Endothelial cell of umbilical vein (primary cell): ENCODE measurements at regions of chr13 and their contacts with region 1.

Region 1: DNA sequence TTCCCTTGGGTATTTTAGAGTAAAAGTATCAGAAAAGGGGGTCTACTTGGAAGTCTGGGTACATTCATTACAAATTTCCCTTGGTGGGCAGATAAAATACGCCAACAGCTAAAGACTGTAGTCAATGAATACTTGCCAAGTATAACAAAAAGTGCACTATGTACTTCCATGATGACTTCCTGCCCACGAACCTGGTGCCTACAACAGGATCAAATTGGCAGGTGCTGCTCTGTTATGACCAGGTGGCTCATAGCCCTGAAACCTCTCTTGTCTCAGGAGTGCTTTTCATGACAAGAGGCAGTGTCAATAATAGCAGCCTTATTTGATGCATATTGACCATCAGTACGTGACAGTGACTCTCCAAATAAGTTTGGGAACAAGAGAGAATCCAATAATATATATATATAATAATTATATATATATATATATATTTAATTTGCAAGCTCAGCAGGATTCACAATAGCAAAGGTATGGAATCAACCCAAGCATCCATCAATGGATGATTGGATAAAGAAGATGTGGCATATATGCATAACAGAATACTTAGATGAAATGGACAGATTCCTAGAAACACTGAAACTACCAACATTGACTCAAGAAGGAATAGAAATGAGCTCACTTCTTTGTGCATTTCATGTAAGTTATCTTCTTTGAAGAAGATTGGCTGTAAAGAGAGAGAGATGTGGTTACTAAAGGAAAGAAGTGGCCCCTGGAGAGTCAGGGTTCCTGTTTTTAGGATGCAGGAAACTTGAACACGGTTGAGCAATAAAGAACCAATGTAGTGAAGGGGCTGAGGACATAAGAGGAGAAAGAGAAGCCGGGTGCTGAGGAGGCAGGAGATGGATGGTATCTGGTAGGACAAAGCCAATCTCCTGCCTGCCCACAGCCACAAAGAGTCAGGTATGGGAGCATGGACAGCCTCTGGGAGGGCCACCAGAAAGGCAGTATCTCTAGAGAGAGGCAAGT is 52.0 kb upstream of the GTF2F2 start:
- DNase-seq: no peak
- H3K4me3 ChIP-seq: no peak overlapping the region
- H3K27ac ChIP-seq: no peak overlapping the region
- H3K4me1 ChIP-seq: no peaks in the 10 kb centered on the region
- H3K27me3 ChIP-seq: peaks cover 4 to 5% of the 10 kb centered on the region in 2 experiments
- CTCF ChIP-seq: no peak
- POLR2A ChIP-seq: no peak

Region 2: GRCh38 chr13:44679597-44679996 is 388.7 kb before region 1 on chr13:
- CTCF ChIA-PET with region 1: no interaction called
- POLR2A ChIA-PET with region 1: no interaction called
- dilution Hi-C with region 1: no loop called
- intact Hi-C with region 1: no loop called
- DNase-seq: no peak
- H3K4me3 ChIP-seq: no peak overlapping the region
- H3K27ac ChIP-seq: no peak overlapping the region
- H3K4me1 ChIP-seq: no peaks in the 10 kb centered on the region
- H3K27me3 ChIP-seq: no peaks in the 10 kb centered on the region
- CTCF ChIP-seq: no peak
- POLR2A ChIP-seq: no peak

Region 3: DNA sequence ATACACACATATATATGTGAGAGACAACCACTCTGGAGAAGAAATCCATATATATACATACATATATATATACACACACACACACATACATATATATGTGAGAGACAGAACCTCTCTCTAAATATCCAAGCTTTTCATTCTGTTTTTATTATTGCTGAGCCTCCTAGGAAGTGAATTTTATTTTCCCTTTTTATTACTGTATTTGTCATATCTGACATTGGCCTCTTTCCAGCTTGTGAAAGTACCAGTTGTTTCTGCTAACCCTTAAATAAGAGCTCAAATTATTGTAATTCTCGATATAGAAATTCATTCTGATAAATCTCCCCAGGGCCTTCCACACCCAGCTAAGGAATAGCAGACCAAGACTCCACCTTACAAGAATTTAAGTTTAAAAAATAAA is 160.1 kb before region 1 on chr13:
- CTCF ChIA-PET with region 1: no interaction called
- POLR2A ChIA-PET with region 1: no interaction called
- dilution Hi-C with region 1: no loop called
- intact Hi-C with region 1: no loop called
- DNase-seq: no peak
- H3K4me3 ChIP-seq: no peak overlapping the region
- H3K27ac ChIP-seq: no peak overlapping the region
- H3K4me1 ChIP-seq: no peaks in the 10 kb centered on the region
- H3K27me3 ChIP-seq: no peaks in the 10 kb centered on the region
- CTCF ChIP-seq: no peak
- POLR2A ChIP-seq: no peak

Region 4: DNA sequence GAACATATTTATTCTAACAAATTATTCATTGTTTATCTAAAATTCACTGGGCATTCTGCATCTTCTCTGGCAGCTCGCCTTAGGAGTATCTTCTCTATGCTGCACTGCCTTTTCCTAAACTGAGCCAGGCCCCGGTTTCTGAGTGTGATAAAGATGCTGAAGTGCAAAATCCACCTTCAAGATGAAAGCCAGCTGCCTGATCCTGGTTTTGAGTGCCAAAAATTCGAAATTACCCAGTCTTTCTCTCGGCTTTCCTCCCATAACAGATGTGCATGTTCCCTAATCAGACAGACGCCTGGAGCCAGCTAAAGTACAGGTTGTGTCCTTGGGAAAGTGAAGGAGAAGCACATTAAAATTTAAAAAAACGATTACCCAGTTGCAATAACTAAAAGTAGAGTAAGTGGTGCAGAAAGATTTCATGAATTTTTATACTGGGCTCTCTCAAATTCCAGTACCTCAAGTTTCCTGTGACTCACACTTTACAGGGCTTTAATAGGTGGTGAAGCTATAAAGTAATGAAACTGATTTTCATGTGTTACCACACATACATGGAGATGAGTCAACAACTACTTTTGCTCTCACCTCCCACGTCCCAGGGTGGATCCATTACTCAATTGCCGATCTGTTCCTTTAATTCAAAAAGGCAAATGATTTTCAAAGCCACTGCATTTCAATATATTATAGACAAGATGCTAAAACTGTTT is 13.0 kb before region 1 on chr13:
- CTCF ChIA-PET with region 1: interaction called, 10 read pairs
- POLR2A ChIA-PET with region 1: no interaction called
- dilution Hi-C with region 1: no loop called
- intact Hi-C with region 1: no loop called
- DNase-seq: peak; percentile 14
- H3K4me3 ChIP-seq: no peak overlapping the region
- H3K27ac ChIP-seq: no peak overlapping the region
- H3K4me1 ChIP-seq: no peaks in the 10 kb centered on the region
- H3K27me3 ChIP-seq: peaks cover 4 to 5% of the 10 kb centered on the region in 2 experiments
- CTCF ChIP-seq: no peak
- POLR2A ChIP-seq: no peak